ENCODE measurements at regions of chr6 and their contacts with region 1.

Region 1: DNA sequence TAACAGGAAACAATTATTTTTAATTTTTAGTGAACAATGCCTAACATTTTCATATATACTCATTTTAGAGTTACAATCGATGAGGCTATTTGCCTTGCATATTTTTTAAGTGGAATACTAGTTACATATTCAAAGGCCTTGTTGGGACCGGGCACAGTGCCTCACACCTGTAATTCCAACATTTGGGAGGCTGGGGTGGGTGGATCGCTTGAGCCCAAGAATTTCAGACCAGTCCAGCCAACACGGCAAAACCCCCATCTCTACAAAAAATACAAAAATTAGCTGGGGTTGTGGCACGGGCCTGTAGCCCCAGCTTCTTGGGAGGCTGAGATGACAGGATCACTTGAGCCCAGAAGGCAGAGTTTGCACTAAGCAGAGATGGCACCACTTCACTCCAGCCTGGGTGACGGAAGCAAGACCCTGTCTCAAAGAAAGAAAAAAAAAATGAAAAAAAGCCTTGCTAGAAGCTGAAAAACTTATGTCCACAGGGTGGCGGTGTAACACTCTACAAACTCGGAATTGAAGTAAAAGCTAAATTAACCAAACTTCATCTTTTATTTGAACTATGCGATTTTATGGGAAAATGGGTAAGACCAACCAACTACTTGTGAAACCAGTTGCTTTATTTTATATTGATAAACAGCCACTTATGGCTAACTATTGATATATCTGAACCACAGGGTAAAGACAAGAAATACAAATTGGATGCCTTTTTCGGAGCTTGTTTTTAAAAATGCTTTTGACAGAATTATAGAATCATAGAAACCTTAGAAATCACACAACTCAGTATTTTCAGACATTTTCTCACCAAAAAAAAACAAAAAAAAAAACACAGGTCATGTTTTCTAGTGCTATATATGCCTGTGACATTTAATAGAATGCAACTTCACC is 24.1 kb upstream of the ROS1 start:
- DNase-seq: peak; percentile 57 to 65 (median 63)
- H3K4me3 ChIP-seq: no peak overlapping the region
- H3K4me3 Mint-ChIP-seq: no peak overlapping the region
- H3K27ac ChIP-seq: no peak overlapping the region
- H3K27ac Mint-ChIP-seq: no peak overlapping the region
- H3K4me1 ChIP-seq: no peaks in the 10 kb centered on the region
- H3K4me1 Mint-ChIP-seq: no peaks in the 10 kb centered on the region
- H3K27me3 ChIP-seq: peaks cover 12% of the 10 kb centered on the region
- H3K27me3 Mint-ChIP-seq: peaks cover 11 to 18% of the 10 kb centered on the region in 2 donors

Region 2: DNA sequence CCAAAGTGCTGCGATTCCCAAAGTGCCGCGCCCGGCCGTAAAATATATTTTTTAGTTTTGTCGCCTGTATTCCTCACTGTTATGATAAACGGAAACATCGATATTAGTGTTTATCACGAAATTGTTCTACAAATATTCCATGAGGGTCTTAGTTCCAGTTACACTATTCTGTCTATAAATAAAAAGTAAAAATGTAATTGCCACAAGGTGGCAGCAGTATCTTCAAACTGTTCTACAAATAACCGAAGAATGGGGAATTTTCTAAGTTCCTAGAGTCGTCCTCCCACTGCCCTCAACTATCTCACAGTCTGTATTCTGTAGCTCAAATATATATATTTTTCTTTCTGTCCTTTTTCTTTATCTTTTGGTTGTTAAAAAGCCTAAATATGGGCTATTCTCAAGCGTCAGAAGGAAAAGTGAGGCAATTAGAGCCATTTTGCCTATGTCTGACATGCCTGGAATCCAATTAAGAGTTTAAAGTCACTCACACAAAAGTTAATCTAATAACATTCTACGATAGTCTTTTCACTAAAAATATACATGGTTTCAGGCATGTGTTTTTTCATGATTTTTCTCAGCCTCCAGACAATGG is 670.1 kb before region 1 on chr6:
- CTCF ChIA-PET with region 1: no interaction called
- POLR2A ChIA-PET with region 1: no interaction called
- intact Hi-C with region 1: loop called (anchors 5 kb)
- DNase-seq: no peak
- H3K4me3 ChIP-seq: no peak overlapping the region
- H3K4me3 Mint-ChIP-seq: no peak overlapping the region
- H3K27ac ChIP-seq: no peak overlapping the region
- H3K27ac Mint-ChIP-seq: no peak overlapping the region
- H3K4me1 ChIP-seq: no peaks in the 10 kb centered on the region
- H3K4me1 Mint-ChIP-seq: no peaks in the 10 kb centered on the region
- H3K27me3 ChIP-seq: no peaks in the 10 kb centered on the region
- H3K27me3 Mint-ChIP-seq: peaks cover 8 to 13% of the 10 kb centered on the region in 2 donors

Region 3: GRCh38 chr6:116902629-116903028 is 547.2 kb before region 1 on chr6:
- CTCF ChIA-PET with region 1: no interaction called
- POLR2A ChIA-PET with region 1: no interaction called
- intact Hi-C with region 1: no loop called
- DNase-seq: no peak
- H3K4me3 ChIP-seq: no peak overlapping the region
- H3K4me3 Mint-ChIP-seq: no peak overlapping the region
- H3K27ac ChIP-seq: no peak overlapping the region
- H3K27ac Mint-ChIP-seq: no peak overlapping the region
- H3K4me1 ChIP-seq: no peaks in the 10 kb centered on the region
- H3K4me1 Mint-ChIP-seq: no peaks in the 10 kb centered on the region
- H3K27me3 ChIP-seq: no peaks in the 10 kb centered on the region
- H3K27me3 Mint-ChIP-seq: no peaks in the 10 kb centered on the region

Region 4: DNA sequence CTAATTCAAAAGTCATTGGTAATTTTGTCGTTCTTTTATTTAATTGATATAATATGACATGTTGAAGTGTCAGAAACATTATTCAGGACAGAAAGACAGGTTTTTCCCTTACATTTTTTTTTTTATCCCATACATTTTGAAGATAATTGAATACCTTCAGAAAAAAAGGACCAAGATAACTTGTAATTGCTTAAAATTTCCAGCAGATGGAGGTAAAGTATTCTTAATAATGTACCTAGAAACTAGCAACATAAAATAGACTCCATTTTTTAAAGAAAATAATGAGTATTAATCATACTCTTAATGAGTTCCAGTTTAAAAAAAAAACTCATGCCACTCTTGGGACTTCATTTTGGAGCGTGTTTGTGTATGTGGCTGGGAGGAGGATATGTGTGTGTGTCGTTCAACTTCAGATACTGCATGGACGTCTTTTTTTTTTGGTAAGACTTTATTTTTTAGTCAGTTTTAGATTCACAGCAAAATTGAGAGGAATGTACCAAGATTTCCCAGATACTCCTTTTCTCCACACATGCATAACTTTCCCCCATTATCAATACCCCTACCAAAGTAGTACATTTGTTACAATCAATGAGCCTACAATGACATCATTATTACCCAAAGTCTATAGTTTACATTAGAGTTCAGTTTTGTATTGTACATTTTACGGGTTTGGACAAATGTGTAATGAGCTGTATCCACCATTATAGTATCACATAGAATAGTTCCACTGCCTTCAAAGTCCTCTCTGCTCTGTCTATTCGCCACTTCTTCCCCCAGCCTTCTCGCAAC is 103.5 kb before region 1 on chr6:
- CTCF ChIA-PET with region 1: no interaction called
- POLR2A ChIA-PET with region 1: no interaction called
- intact Hi-C with region 1: loop called (anchors 2 kb)
- DNase-seq: peak in 4 of 5 donors; percentile 22 to 31 (median 28)
- H3K4me3 ChIP-seq: no peak overlapping the region
- H3K4me3 Mint-ChIP-seq: peak overlapping the region in 1 of 8 donors; percentile 12
- H3K27ac ChIP-seq: no peak overlapping the region
- H3K27ac Mint-ChIP-seq: no peak overlapping the region
- H3K4me1 ChIP-seq: no peaks in the 10 kb centered on the region
- H3K4me1 Mint-ChIP-seq: no peaks in the 10 kb centered on the region
- H3K27me3 ChIP-seq: no peaks in the 10 kb centered on the region
- H3K27me3 Mint-ChIP-seq: peaks cover 5 to 6% of the 10 kb centered on the region in 2 donors

Region 5: DNA sequence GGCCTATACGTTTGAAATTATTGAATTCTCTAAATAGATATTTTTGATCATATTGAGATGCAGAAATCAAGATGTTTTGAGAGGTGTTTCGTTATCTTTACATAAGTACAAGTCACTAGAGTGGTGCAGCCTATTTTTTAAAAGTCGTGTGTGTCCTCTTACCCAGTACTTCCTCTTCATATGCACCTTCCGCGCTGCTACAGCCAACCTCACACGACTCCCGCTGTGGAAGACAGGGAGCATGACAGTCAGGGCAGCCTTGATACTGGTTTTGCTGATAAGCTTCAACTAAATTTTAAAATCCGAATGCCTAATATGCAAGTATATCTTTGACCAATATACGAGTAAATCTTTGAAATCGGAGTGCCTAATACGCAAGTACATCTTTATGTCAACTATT is 40.4 kb before region 1 on chr6:
- CTCF ChIA-PET with region 1: no interaction called
- POLR2A ChIA-PET with region 1: no interaction called
- intact Hi-C with region 1: no loop called
- DNase-seq: no peak
- H3K4me3 ChIP-seq: no peak overlapping the region
- H3K4me3 Mint-ChIP-seq: no peak overlapping the region
- H3K27ac ChIP-seq: no peak overlapping the region
- H3K27ac Mint-ChIP-seq: peak overlapping the region in 1 of 7 donors; percentile 4
- H3K4me1 ChIP-seq: no peaks in the 10 kb centered on the region
- H3K4me1 Mint-ChIP-seq: no peaks in the 10 kb centered on the region
- H3K27me3 ChIP-seq: no peaks in the 10 kb centered on the region
- H3K27me3 Mint-ChIP-seq: peaks cover 10% of the 10 kb centered on the region in 2 donors

Region 6: GRCh38 chr6:117482240-117483003 is 32.6 kb after region 1 on chr6 and contains the start of gene DCBLD1:
- CTCF ChIA-PET with region 1: interaction called, 14 read pairs
- POLR2A ChIA-PET with region 1: interaction called, 3 read pairs
- intact Hi-C with region 1: loop called (anchors 2 kb)
- DNase-seq: peak; percentile 46 to 62 (median 55)
- H3K4me3 ChIP-seq: peak within 1 kb of the TSS; percentile 38 to 57
- H3K4me3 Mint-ChIP-seq: peak within 1 kb of the TSS; percentile 91 to 98 (median 94)
- H3K27ac ChIP-seq: peak within 1 kb of the TSS; percentile 36
- H3K27ac Mint-ChIP-seq: peak within 1 kb of the TSS; percentile 71 to 85 (median 79)
- H3K4me1 ChIP-seq: peaks cover 21% of the 10 kb centered on the region
- H3K4me1 Mint-ChIP-seq: peaks cover 13 to 18% (median 14%) of the 10 kb centered on the region in 4 donors
- H3K27me3 ChIP-seq: no peaks in the 10 kb centered on the region
- H3K27me3 Mint-ChIP-seq: peaks cover 5 to 15% of the 10 kb centered on the region in 2 donors
- total RNA-seq, gene DCBLD1: 8.7 to 9.7 TPM

Region 7: DNA sequence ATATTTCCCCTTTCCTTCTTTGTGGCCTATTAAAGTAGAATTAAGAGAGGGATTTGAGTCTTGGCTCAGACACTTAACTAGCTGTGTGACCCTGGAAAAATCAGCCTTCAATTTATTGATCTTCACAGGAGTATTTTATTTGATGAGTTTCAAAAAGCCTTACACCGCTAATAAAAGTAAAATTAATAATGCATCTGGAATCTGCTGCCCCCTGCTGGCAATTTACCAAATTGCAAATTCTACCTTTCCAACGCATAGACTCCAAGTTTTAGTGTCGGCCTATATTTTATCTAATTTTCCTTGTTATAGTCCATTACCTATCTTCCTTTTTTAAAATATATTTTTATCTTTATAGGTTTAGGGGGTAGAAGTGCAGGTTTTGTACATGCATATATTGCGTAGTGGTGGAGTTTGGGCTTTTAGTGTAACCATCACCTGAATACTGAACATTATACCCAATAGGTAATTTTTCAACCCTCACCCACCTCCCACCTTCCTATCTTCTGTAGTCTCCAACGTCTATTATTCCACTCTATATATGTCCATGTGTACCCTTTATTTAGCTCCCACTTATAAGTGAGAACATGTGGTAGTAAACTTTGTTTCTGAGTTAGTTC is 106.2 kb after region 1 on chr6:
- CTCF ChIA-PET with region 1: interaction called, 232 read pairs
- POLR2A ChIA-PET with region 1: no interaction called
- intact Hi-C with region 1: loop called (anchors 1 kb)
- DNase-seq: peak; percentile 41 to 58 (median 55)
- H3K4me3 ChIP-seq: no peak overlapping the region
- H3K4me3 Mint-ChIP-seq: peak overlapping the region in 1 of 8 donors; percentile 25
- H3K27ac ChIP-seq: no peak overlapping the region
- H3K27ac Mint-ChIP-seq: no peak overlapping the region
- H3K4me1 ChIP-seq: peaks cover 6% of the 10 kb centered on the region
- H3K4me1 Mint-ChIP-seq: peaks cover 1 to 5% (median 3%) of the 10 kb centered on the region in 4 donors
- H3K27me3 ChIP-seq: no peaks in the 10 kb centered on the region
- H3K27me3 Mint-ChIP-seq: no peaks in the 10 kb centered on the region

Region 8: GRCh38 chr6:117607511-117607910 is 157.7 kb after region 1 on chr6:
- CTCF ChIA-PET with region 1: interaction called, 100 read pairs
- POLR2A ChIA-PET with region 1: interaction called, 14 read pairs
- intact Hi-C with region 1: loop called (anchors 1 kb)
- DNase-seq: no peak
- H3K4me3 ChIP-seq: no peak overlapping the region
- H3K4me3 Mint-ChIP-seq: no peak overlapping the region
- H3K27ac ChIP-seq: no peak overlapping the region
- H3K27ac Mint-ChIP-seq: no peak overlapping the region
- H3K4me1 ChIP-seq: peaks cover 6% of the 10 kb centered on the region
- H3K4me1 Mint-ChIP-seq: peaks cover 6 to 12% (median 9%) of the 10 kb centered on the region in 4 donors
- H3K27me3 ChIP-seq: peaks cover 4% of the 10 kb centered on the region
- H3K27me3 Mint-ChIP-seq: peaks cover 12 to 16% of the 10 kb centered on the region in 2 donors

Region 9: GRCh38 chr6:117674991-117675657 is 225.3 kb after region 1 on chr6 and contains the start of gene NUS1:
- CTCF ChIA-PET with region 1: no interaction called
- POLR2A ChIA-PET with region 1: no interaction called
- intact Hi-C with region 1: loop called (anchors 10 kb)
- DNase-seq: peak; percentile 97
- H3K4me3 ChIP-seq: peak within 1 kb of the TSS; percentile 81 to 84
- H3K4me3 Mint-ChIP-seq: peak within 1 kb of the TSS; percentile 89 to 96 (median 93)
- H3K27ac ChIP-seq: peak within 1 kb of the TSS; percentile 67
- H3K27ac Mint-ChIP-seq: peak within 1 kb of the TSS; percentile 85 to 97 (median 95)
- H3K4me1 ChIP-seq: peaks cover 37% of the 10 kb centered on the region
- H3K4me1 Mint-ChIP-seq: peaks cover 38 to 64% (median 52%) of the 10 kb centered on the region in 4 donors
- H3K27me3 ChIP-seq: no peaks in the 10 kb centered on the region
- H3K27me3 Mint-ChIP-seq: no peaks in the 10 kb centered on the region
- total RNA-seq, gene NUS1: 33.0 to 33.2 TPM